ENCODE measurements at regions of chr20 and their contacts with region 1.

Region 1: DNA sequence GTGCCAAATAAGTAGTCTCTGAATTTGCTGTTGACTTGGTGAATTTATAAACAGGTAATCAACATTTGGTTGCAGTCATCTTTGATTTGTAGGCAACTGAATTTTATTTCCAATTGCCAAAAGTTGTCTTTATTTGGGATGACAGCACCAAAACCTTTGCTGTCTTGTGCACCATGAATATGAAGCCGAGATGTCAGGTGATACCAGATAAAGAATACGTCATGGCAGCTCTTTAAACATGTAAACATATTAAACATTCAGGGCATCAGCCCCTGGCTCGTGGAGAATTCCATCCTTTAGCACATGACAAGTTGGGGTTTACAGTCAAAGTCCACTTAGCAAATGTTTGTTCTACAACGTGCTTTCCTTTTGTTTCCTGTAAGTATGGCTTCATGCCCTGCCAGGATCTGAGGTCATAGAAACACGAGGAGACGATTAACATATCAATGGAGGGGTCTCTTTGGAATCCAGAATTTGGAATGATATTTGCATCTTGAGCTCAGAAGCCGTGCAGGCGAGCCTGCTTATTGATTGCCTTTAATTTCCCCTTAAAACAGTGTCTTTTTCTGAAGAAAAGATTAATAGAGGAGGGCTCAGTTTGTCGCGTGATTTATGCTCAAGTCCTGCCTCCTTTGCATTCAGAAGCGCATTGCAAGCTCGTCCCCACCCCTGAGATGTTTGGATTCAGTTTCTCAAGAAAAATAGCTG is 170.2 kb upstream of the ZNF217 start:
- DNase-seq: peak; percentile 70
- ATAC-seq: peak; percentile 74
- H3K4me3 ChIP-seq: peak overlapping the region in 1 of 2 experiments; percentile 36; a peak in 2 of 4 replicates
- H3K27ac ChIP-seq: peak overlapping the region; percentile 100
- H3K4me1 ChIP-seq: peaks cover 33% of the 10 kb centered on the region
- H3K27me3 ChIP-seq: no peaks in the 10 kb centered on the region
- CTCF ChIP-seq: no peak

Region 2: DNA sequence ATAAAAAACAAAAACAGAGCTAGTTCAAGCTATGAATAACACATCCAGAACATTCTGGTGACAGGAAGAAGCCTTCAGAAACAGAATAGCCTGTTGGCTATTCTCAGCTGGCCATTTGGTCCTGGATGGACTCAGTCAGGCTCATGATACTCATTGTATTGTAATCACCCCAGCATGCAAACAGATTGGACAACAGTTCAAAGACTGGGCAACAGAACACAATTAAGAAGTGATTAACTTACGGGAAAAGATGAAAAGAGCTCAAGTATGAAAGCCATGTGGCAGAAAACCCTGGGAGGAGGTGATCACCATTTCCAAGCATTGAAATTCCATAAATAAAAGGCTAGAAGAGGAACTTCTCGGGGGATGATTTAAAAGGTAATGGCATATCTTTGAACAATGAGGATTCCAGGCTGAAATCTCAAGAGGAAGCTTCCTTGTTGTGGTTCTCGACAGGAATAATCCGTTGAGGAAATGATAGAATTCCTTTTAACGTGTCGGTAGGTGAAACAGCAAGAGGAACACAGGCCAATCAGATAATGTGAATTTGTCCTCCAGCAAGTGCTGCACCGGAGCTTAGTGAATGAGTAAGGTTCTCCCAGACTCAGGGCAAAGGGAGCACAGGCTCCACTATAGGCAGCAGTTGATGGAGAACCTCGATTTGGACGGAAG is 134.2 kb after region 1 on chr20:
- CTCF ChIA-PET with region 1: no interaction called
- POLR2A ChIA-PET with region 1: interaction called, 11 read pairs
- in situ Hi-C with region 1: no loop called
- intact Hi-C with region 1: no loop called
- DNase-seq: no peak
- ATAC-seq: peak; percentile 52
- H3K4me3 ChIP-seq: peak overlapping the region; percentile 38
- H3K27ac ChIP-seq: peak overlapping the region; percentile 100
- H3K4me1 ChIP-seq: peaks cover 65% of the 10 kb centered on the region
- H3K27me3 ChIP-seq: no peaks in the 10 kb centered on the region
- CTCF ChIP-seq: no peak

Region 3: GRCh38 chr20:53923566-53924369 is 159.9 kb after region 1 on chr20:
- CTCF ChIA-PET with region 1: interaction called, 17 read pairs
- POLR2A ChIA-PET with region 1: no interaction called
- in situ Hi-C with region 1: no loop called
- intact Hi-C with region 1: loop called (anchors 10 kb)
- DNase-seq: no peak
- ATAC-seq: no peak
- H3K4me3 ChIP-seq: no peak overlapping the region
- H3K27ac ChIP-seq: peak overlapping the region; percentile 78
- H3K4me1 ChIP-seq: peaks cover 19% of the 10 kb centered on the region
- H3K27me3 ChIP-seq: no peaks in the 10 kb centered on the region
- CTCF ChIP-seq: no peak

Region 4: GRCh38 chr20:54207743-54208547 is 444.1 kb after region 1 on chr20 and contains the start of gene PFDN4:
- CTCF ChIA-PET with region 1: no interaction called
- POLR2A ChIA-PET with region 1: no interaction called
- in situ Hi-C with region 1: no loop called
- intact Hi-C with region 1: no loop called
- DNase-seq: peak; percentile 60
- ATAC-seq: peak; percentile 99
- H3K4me3 ChIP-seq: peak within 1 kb of the TSS; percentile 74 to 86
- H3K27ac ChIP-seq: peak within 1 kb of the TSS; percentile 98
- H3K4me1 ChIP-seq: peaks cover 10% of the 10 kb centered on the region
- H3K27me3 ChIP-seq: no peaks in the 10 kb centered on the region
- CTCF ChIP-seq: peak; percentile 97
- total RNA-seq, gene PFDN4: 48.2 TPM